Activated naive CD8-positive, alpha-beta T cell treated with anti-CD3 and anti-CD28 coated beads, Interleukin-2, amount 10 ng/mL, durations not matched to agents 7 days and 5 days (primary cell): ENCODE measurements at regions of chr11 and their contacts with region 1.

Region 1: GRCh38 chr11:117946842-117947526 is 17.8 kb upstream of the TMPRSS13 start:
- DNase-seq: peak; percentile 89
- ATAC-seq: peak; percentile 24
- H3K4me3 Mint-ChIP-seq: peak overlapping the region; percentile 1
- H3K27ac Mint-ChIP-seq: peak overlapping the region; percentile 67
- H3K4me1 Mint-ChIP-seq: peaks cover 78% of the 10 kb centered on the region
- H3K27me3 Mint-ChIP-seq: no peaks in the 10 kb centered on the region

Region 2: GRCh38 chr11:117817368-117818040 is 129.5 kb before region 1 on chr11:
- POLR2A ChIA-PET with region 1: interaction called, 32 read pairs
- DNase-seq: peak; percentile 88
- ATAC-seq: peak; percentile 27
- H3K4me3 Mint-ChIP-seq: peak overlapping the region; percentile 79
- H3K27ac Mint-ChIP-seq: peak overlapping the region; percentile 98
- H3K4me1 Mint-ChIP-seq: peaks cover 57% of the 10 kb centered on the region
- H3K27me3 Mint-ChIP-seq: no peaks in the 10 kb centered on the region

Region 3: DNA sequence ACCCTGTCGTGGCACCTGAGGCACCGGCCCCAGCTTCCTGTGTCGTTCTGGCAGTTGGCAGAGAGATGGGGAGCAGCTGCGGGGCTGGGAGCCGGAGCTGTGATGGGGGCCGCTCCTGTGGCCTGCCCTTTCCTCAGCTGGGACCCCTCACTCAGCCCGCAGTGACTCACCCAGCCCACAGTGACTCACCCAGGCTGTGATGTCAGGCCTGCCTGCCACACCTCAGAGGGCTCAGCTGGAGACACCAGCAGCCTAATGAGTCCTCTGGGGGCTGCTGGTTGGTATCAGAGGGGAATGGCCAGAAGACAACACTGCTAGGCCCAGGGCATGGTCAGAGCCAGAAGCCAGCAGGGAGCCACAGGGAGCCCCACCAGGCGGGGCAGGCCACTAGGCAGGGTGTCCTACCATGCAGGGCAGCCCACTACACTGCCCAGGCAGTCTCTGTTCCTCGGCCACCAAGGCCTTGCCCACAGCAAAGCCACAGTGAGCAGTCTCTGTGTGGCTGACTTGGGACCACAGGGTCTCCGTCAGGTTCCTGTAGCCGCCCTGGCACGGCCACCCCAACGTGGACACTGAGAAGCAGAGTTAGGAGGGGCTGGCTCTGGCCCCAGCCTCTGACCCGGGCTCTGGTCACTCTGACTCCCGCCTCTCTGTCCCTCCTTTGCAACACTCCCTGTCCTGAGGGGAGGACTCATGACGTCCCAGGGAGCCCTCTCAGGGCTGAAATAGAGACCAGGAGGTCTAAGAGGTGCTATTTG is 118.2 kb before region 1 on chr11:
- POLR2A ChIA-PET with region 1: interaction called, 32 read pairs
- DNase-seq: peak; percentile 84
- ATAC-seq: peak; percentile 93
- H3K4me3 Mint-ChIP-seq: peak overlapping the region; percentile 73
- H3K27ac Mint-ChIP-seq: peak overlapping the region; percentile 94
- H3K4me1 Mint-ChIP-seq: peaks cover 58% of the 10 kb centered on the region
- H3K27me3 Mint-ChIP-seq: no peaks in the 10 kb centered on the region

Region 4: DNA sequence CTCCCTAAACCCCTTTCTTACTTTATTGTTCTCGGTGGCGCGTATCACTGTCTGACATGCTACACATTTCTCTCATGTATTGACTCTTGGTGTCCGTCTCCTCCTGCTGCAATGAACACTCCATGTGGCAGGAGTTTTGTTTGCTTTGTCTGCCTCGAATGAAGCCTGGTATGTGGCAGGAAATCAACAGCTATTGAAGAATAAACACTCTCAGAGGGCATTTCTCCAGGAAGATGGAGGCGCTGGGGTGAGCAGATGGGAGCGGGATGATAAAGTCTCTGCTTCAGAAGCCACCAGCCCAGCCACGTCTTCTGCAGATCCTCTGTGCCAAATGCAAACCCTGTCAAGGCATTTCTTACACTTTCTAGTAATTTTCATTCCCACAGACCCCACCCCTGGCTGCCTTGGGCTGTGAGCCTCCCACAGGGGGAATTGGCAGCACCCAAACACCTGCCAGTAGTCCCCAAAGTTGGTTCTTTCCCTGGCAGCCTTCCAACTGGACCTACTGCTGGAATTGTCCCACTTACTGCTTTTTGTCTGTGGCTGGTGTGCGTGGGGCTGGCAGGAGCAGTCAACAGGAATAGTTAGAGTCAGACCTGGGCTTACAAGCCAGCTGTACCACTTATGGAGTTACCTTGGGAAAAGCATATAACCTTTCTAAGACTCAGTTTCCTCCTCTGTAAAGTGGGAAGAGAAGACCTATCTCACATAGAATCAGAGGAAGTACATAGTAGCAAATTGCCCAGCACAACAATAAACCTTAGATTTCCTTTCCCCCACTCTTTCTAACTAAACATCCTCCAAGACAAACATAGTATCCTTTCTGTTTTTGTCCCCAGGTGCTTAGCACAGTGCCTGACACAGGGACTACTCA is 25.9 kb after region 1 on chr11:
- POLR2A ChIA-PET with region 1: interaction called, 608 read pairs
- DNase-seq: no peak
- ATAC-seq: no peak
- H3K4me3 Mint-ChIP-seq: peak overlapping the region; percentile 29
- H3K27ac Mint-ChIP-seq: peak overlapping the region; percentile 74
- H3K4me1 Mint-ChIP-seq: peaks cover 79% of the 10 kb centered on the region
- H3K27me3 Mint-ChIP-seq: no peaks in the 10 kb centered on the region

Region 5: DNA sequence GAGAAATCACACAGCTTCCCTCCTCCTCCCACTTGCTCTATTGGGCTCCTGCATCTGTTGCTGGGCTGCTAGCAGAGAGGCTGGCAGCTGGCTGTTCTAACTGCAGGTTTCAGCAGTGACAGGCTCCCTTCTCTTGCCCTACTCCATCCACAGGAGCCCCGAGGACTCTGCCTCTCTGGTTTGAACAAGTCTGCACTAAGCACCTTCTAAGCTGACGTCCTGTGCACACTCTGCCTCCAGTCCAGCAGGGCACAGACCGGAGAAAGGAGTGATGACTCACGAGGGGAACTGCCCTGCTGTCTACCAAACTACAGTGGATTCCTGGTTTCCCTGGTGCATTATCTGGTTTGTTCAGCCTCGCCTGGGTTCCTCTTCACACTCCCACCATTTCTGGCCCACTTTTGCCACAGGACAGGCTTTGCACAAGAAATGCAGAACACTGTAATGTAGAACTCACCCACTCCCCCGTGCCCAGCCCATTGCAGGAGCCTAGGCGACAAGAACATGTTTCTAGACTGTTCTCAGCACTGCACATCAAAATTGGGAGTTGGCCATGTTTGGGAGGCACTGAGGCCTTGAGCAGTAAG is 65.2 kb after region 1 on chr11:
- POLR2A ChIA-PET with region 1: interaction called, 608 read pairs
- DNase-seq: peak; percentile 35
- ATAC-seq: no peak
- H3K4me3 Mint-ChIP-seq: peak overlapping the region; percentile 55
- H3K27ac Mint-ChIP-seq: peak overlapping the region; percentile 86
- H3K4me1 Mint-ChIP-seq: peaks cover 87% of the 10 kb centered on the region
- H3K27me3 Mint-ChIP-seq: no peaks in the 10 kb centered on the region

Region 6: GRCh38 chr11:118928108-118928870 is 981.3 kb after region 1 on chr11:
- POLR2A ChIA-PET with region 1: no interaction called
- DNase-seq: peak; percentile 96
- ATAC-seq: peak; percentile 46
- H3K4me3 Mint-ChIP-seq: peak overlapping the region; percentile 99
- H3K27ac Mint-ChIP-seq: peak overlapping the region; percentile 93
- H3K4me1 Mint-ChIP-seq: peaks cover 50% of the 10 kb centered on the region
- H3K27me3 Mint-ChIP-seq: no peaks in the 10 kb centered on the region